Activated CD8-positive, alpha-beta T cell treated with anti-CD3 and anti-CD28 coated beads for 36 hours (primary cell): ENCODE measurements at regions of chr11 and their contacts with region 1.

Region 1: GRCh38 chr11:64358907-64359711 is at the start of gene RPS6KA4:
- DNase-seq: peak; percentile 64
- ATAC-seq: peak; percentile 68
- H3K4me3 Mint-ChIP-seq: peak within 1 kb of the TSS; percentile 79
- H3K27ac Mint-ChIP-seq: peak within 1 kb of the TSS; percentile 87
- H3K4me1 Mint-ChIP-seq: peaks cover 48% of the 10 kb centered on the region
- H3K27me3 Mint-ChIP-seq: no peaks in the 10 kb centered on the region
- CTCF ChIP-seq: no peak
- total RNA-seq, gene RPS6KA4: 24.6 to 26.0 TPM

Region 2: DNA sequence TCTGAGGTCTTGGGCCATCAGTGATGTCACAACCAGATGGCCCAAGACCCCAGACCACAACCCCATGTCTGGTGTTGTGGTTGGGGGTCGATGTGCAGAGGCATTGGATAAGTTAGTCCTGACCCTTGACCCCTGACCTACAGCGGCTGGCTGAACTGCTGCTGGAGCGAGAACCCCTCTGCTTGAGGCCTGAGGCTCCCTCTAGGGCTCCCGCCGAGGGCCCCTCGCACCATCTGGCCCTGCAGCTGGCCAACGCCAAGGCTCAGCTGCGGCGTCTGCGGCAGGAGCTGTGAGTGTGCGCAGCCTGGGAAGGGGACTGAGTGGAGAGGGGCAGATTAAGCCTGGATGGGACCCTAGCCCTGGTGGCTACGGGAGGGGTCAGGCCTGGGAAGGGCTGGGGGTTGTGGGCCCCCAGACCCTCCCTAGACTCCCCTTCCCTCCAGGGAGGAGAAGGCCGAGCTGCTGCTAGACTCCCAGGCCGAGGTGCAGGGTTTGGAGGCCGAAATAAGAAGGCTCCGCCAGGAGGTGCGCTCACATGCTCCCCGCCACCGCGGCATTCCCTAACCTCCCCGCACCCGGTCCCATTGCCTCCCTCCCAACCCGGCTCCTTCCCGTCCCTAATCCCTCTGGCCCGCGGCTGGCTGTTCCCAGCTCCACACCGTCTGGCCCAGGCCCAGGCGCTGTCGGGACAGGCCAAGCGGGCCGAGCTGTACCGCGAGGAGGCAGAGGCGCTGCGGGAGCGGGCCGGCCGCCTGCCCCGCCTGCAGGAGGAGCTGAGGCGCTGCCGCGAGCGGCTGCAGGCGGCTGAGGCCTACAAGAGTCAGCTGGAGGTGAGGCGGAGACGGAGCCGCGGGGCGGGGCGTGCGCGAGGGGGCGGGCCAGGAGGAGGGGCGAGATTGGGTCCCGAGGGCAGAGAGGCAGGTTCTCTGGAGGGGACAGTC is 17.0 kb before region 1 on chr11:
- CTCF ChIA-PET with region 1: interaction called, 75 read pairs
- POLR2A ChIA-PET with region 1: interaction called, 19 read pairs
- intact Hi-C with region 1: no loop called
- DNase-seq: peak; percentile 94
- ATAC-seq: peak; percentile 75
- H3K4me3 Mint-ChIP-seq: peak overlapping the region; percentile 84
- H3K27ac Mint-ChIP-seq: no peak overlapping the region
- H3K4me1 Mint-ChIP-seq: peaks cover 36% of the 10 kb centered on the region
- H3K27me3 Mint-ChIP-seq: no peaks in the 10 kb centered on the region
- CTCF ChIP-seq: peak; percentile 44

Region 3: GRCh38 chr11:64803163-64803845 is 444.2 kb after region 1 on chr11 and contains the start of gene MAP4K2:
- CTCF ChIA-PET with region 1: no interaction called
- POLR2A ChIA-PET with region 1: no interaction called
- intact Hi-C with region 1: no loop called
- DNase-seq: peak; percentile 88
- ATAC-seq: peak; percentile 96
- H3K4me3 Mint-ChIP-seq: peak within 1 kb of the TSS; percentile 80
- H3K27ac Mint-ChIP-seq: peak within 1 kb of the TSS; percentile 89
- H3K4me1 Mint-ChIP-seq: peaks cover 37% of the 10 kb centered on the region
- H3K27me3 Mint-ChIP-seq: no peaks in the 10 kb centered on the region
- CTCF ChIP-seq: no peak
- total RNA-seq, gene MAP4K2: 56.4 to 58.0 TPM